HEK293T (cell line): ENCODE measurements at regions of chr16 and their contacts with region 1.

Region 1: GRCh38 chr16:11977376-11978041 is 975 bp downstream of the SNX29 start:
- DNase-seq: no peak

Region 2: DNA sequence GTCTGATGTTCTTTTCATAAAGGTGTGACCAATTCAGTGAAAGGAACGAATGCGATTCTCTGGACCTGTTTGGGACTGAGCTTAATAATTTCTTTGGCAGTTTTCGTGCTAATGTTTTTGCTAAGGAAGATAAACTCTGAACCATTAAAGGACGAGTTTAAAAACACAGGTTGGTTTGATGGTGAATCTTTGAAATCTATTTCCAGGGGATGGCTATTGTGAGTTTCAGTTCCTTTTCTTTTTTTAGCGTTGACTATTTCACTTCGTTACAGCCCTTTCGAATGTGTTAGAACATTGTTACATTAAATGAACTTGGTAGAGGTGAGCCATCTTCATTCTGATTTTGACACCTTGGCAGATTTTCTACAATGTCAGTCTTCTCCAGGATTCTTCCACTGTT is 11.3 kb before region 1 on chr16:
- CTCF ChIA-PET with region 1: interaction called, 3 read pairs
- POLR2A ChIA-PET with region 1: interaction called, 19 read pairs
- DNase-seq: no peak